Dorsolateral prefrontal cortex (tissue), 120 donors: ENCODE measurements at regions of chr17 and their contacts with region 1.

Region 1: DNA sequence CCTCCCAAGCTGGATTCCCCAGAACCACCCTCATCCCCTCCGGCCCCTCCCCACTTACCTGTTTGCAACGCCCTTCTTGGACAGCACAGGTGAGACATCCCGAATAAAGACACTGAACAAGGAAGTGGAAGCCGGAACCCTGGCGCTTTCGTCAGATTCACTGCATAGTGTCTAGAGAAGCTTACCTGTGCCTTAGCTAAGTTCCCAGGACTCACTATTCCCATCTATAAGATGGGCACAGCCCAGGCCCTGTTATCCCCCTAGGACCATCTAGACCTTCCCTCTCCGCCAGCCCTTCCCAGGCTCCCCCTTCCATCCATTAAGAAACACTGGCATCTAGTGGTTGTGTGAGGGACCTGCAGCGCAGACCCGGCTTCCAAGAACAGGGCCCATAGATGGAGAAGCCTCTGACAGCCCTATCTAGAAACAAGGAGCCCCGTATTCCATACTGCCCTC is 26.9 kb upstream of the RPL38 start:
- DNase-seq: peak; percentile 46 to 82 (median 76)
- H3K4me3 ChIP-seq: no peak overlapping the region
- H3K27ac ChIP-seq: peak overlapping the region in 7 of 59 donors; percentile 51 to 62 (median 55)
- H3K27me3 ChIP-seq: peaks cover 0 to 10% (median 0%) of the 10 kb centered on the region in 45 donors
- CTCF ChIP-seq: peak; percentile 46 to 94 (median 83)

Region 2: GRCh38 chr17:74089869-74090464 is 86.6 kb before region 1 on chr17:
- intact Hi-C with region 1: loop called in 1 of 2 experiments (anchors 5 kb)
- DNase-seq: peak in 7 of 10 donors; percentile 20 to 61 (median 54)
- H3K4me3 ChIP-seq: no peak overlapping the region
- H3K27ac ChIP-seq: no peak overlapping the region
- H3K27me3 ChIP-seq: no peaks in the 10 kb centered on the region
- CTCF ChIP-seq: peak in 53 of 56 donors; percentile 16 to 74 (median 52)